Right ventricle myocardium superior (tissue), 1 donor: ENCODE measurements at regions of chr2 and their contacts with region 1.

Region 1: DNA sequence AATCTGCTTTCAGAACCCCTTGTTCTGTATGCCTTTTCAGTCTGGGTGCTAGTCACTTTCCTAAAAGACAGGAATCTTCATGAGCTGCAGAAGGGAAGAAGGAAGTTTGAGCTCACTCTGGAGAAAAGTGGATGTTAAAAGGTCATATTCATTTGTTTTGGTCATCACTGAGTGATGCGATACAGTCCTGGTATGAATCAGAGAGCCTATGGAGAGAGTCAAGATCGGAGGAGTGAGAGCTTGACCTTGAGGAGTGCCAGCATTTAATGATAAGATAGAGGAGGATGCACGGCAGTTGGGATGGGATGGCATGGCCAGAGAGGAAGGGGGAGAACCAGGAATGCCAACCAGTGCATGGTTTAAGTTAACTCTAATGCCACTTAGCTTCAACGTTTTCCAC is 19.6 kb downstream of the USP39 start:
- DNase-seq: no peak
- ATAC-seq: no peak

Region 2: DNA sequence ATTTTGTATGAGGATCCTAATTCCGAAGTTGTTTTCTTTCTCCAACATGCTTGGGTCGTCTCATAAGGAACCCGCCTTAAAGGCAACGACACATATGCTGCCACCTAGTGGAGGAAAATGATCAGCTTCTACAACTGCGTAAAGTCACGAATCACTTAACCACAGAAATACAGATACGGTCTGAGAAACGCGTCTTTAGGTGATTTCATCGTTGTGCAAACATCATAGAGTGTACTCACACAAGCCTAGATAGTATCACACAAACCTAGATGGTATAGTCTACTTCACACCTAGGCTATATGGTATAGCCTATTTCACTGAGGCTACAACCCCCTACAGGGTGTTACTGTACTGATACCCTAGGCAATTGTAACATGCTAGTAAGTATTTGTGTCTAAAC is 71.7 kb after region 1 on chr2:
- intact Hi-C with region 1: loop called (anchors 5 kb)
- DNase-seq: no peak
- ATAC-seq: peak; percentile 57

Region 3: GRCh38 chr2:85813982-85814801 is 178.6 kb after region 1 on chr2:
- intact Hi-C with region 1: loop called (anchors 5 kb)
- DNase-seq: peak; percentile 95
- ATAC-seq: peak; percentile 97